ENCODE measurements at regions of chr6 and their contacts with region 1.

Region 1: GRCh38 chr6:106421496-106421895 is 61.0 kb downstream of the CRYBG1 start:
- DNase-seq: no peak
- H3K4me3 ChIP-seq: no peak overlapping the region
- H3K27ac ChIP-seq: no peak overlapping the region
- H3K4me1 ChIP-seq: peaks cover under 1% of the 10 kb centered on the region
- H3K27me3 ChIP-seq: no peaks in the 10 kb centered on the region
- CTCF ChIP-seq: no peak

Region 2: DNA sequence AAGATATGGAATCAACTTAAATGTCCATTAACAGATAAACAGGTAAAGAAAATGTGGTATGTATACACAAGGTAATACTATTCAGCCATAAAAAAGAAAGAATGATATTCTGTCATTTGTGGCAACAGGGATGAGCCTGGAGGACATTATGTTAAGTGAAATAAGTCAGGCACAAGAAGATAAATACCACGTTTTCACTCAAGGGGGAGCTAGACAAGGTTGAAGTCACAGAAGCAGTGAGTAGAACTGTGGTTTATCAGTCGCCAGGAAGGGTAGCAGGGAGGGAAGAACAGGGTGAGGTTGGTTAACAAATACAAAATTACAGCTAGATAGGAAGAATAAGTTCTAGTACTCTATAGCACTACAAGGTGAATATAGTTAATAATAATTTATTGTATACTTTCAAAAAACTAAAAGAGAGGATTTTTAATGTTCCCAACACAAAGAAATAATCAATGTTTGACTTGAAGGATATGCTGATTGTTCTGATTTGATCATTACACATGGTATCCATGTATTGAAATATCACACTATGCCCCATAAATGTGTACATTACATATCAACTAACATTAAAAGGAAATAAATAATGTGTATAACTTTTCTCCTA is 186.7 kb after region 1 on chr6:
- CTCF ChIA-PET with region 1: no interaction called
- POLR2A ChIA-PET with region 1: no interaction called
- intact Hi-C with region 1: no loop called
- DNase-seq: peak; percentile 73
- H3K4me3 ChIP-seq: no peak overlapping the region
- H3K27ac ChIP-seq: no peak overlapping the region
- H3K4me1 ChIP-seq: no peaks in the 10 kb centered on the region
- H3K27me3 ChIP-seq: no peaks in the 10 kb centered on the region
- CTCF ChIP-seq: peak; percentile 68

Region 3: GRCh38 chr6:106757267-106757666 is 335.8 kb after region 1 on chr6:
- CTCF ChIA-PET with region 1: no interaction called
- POLR2A ChIA-PET with region 1: interaction called, 11 read pairs
- intact Hi-C with region 1: no loop called
- DNase-seq: no peak
- H3K4me3 ChIP-seq: no peak overlapping the region
- H3K27ac ChIP-seq: no peak overlapping the region
- H3K4me1 ChIP-seq: no peaks in the 10 kb centered on the region
- H3K27me3 ChIP-seq: no peaks in the 10 kb centered on the region
- CTCF ChIP-seq: no peak